CD8-positive, alpha-beta memory T cell (primary cell): ENCODE measurements at regions of chr12 and their contacts with region 1.

Region 1: GRCh38 chr12:54201001-54201794 is 12.4 kb upstream of the SMUG1 start:
- DNase-seq: peak; percentile 58 to 77 (median 60)
- H3K4me3 ChIP-seq: no peak overlapping the region
- H3K4me3 Mint-ChIP-seq: no peak overlapping the region
- H3K27ac ChIP-seq: no peak overlapping the region
- H3K27ac Mint-ChIP-seq: no peak overlapping the region
- H3K4me1 ChIP-seq: no peaks in the 10 kb centered on the region
- H3K4me1 Mint-ChIP-seq: no peaks in the 10 kb centered on the region
- H3K27me3 ChIP-seq: peaks cover 17% of the 10 kb centered on the region
- H3K27me3 Mint-ChIP-seq: peaks cover 57 to 79% of the 10 kb centered on the region in 2 donors

Region 2: DNA sequence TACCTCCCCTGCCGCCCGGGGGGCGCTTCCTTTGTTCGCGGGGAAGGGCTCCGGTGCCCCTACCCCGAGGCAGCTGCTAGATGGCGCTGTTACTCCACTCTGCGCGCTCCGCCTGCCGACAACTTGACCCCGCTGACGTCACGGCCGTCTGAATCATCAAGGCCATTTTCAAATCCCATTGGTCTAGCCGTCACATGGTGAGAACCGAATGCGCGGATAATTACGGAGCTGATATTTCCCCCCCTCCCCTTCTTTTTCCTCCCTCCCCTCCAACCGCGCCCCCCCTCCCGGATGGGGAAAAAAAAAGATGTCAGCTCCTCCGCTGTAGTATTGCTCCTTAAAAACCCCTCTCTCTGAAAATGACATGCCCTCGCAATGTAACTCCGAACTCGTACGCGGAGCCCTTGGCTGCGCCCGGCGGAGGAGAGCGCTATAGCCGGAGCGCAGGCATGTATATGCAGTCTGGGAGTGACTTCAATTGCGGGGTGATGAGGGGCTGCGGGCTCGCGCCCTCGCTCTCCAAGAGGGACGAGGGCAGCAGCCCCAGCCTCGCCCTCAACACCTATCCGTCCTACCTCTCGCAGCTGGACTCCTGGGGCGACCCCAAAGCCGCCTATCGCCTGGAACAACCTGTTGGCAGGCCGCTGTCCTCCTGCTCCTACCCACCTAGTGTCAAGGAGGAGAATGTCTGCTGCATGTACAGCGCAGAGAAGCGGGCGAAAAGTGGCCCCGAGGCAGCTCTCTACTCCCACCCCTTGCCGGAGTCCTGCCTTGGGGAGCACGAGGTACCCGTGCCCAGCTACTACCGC is 216.1 kb before region 1 on chr12 and contains the start of gene HOXC10:
- CTCF ChIA-PET with region 1: interaction called, 12 read pairs
- POLR2A ChIA-PET with region 1: no interaction called
- DNase-seq: peak; percentile 49 to 71 (median 65)
- H3K4me3 ChIP-seq: no peak within 1 kb of the TSS
- H3K4me3 Mint-ChIP-seq: peak within 1 kb of the TSS; percentile 70 to 73 (median 71)
- H3K27ac ChIP-seq: no peak within 1 kb of the TSS
- H3K27ac Mint-ChIP-seq: peak within 1 kb of the TSS in 3 of 8 donors; percentile 67 to 77 (median 70)
- H3K4me1 ChIP-seq: peaks cover 26% of the 10 kb centered on the region
- H3K4me1 Mint-ChIP-seq: peaks cover 36 to 46% (median 38%) of the 10 kb centered on the region in 3 donors
- H3K27me3 ChIP-seq: peaks cover 90% of the 10 kb centered on the region
- H3K27me3 Mint-ChIP-seq: peaks cover 93 to 94% of the 10 kb centered on the region in 2 donors
- total RNA-seq, gene HOXC10: not detected